A673 (cell line): ENCODE measurements at regions of chr9 and their contacts with region 1.

Region 1: DNA sequence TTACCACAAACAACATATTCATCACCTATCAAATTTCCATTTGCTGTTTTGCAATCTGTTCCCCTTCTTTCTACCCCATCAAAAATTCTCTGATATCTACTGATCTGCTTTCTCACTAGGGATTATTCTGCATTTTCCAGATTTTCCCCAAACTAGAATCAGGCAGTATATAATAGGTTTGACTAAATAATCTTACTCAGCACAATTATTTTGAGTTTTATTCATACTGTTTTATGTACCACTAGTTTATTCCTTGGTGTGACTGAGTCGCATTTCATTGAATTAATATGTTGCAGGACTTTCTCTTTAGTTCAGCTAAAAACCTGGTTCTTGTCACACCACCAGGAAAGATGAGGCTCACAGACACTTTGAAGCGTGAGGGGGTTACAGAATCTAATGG is 131.4 kb downstream of the CYLC2 start:
- DNase-seq: no peak
- H3K4me3 ChIP-seq: no peak overlapping the region
- H3K27ac ChIP-seq: no peak overlapping the region
- H3K4me1 ChIP-seq: no peaks in the 10 kb centered on the region
- H3K27me3 ChIP-seq: no peaks in the 10 kb centered on the region
- CTCF ChIP-seq: no peak

Region 2: GRCh38 chr9:103068753-103069152 is 57.7 kb before region 1 on chr9:
- CTCF ChIA-PET with region 1: no interaction called
- POLR2A ChIA-PET with region 1: no interaction called
- intact Hi-C with region 1: loop called (anchors 2 kb)
- DNase-seq: no peak
- H3K4me3 ChIP-seq: no peak overlapping the region
- H3K27ac ChIP-seq: no peak overlapping the region
- H3K4me1 ChIP-seq: no peaks in the 10 kb centered on the region
- H3K27me3 ChIP-seq: no peaks in the 10 kb centered on the region
- CTCF ChIP-seq: no peak

Region 3: DNA sequence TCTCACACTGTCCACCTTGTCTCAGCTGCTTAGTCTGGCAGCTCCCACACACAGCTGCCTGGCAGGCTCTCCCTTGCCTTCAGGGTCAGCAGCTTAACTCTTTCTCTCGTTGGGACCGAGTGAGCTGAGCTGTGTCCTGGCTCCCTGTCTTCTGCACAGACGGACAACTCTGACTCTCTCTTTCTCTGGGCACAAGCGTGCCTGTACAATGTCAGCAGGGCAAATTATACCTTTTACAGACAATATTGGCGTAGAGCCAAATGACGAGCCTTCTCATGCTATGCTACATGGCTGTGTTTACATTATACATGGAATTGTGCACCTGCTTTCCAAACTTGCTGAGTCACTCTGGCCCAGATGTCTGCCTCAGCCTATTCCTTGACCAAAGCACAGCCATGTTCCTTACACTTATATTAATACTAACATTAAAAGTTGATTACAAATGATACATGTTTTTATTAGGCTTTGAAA is 57.2 kb after region 1 on chr9:
- CTCF ChIA-PET with region 1: no interaction called
- POLR2A ChIA-PET with region 1: no interaction called
- intact Hi-C with region 1: no loop called
- DNase-seq: no peak
- H3K4me3 ChIP-seq: no peak overlapping the region
- H3K27ac ChIP-seq: no peak overlapping the region
- H3K4me1 ChIP-seq: no peaks in the 10 kb centered on the region
- H3K27me3 ChIP-seq: no peaks in the 10 kb centered on the region
- CTCF ChIP-seq: no peak